Activated CD8-positive, alpha-beta T cell treated with anti-CD3 and anti-CD28 coated beads, Interleukin-2, amount 10 ng/mL, durations not matched to agents 7 days and 5 days (primary cell): ENCODE measurements at regions of chr22 and their contacts with region 1.

Region 1: DNA sequence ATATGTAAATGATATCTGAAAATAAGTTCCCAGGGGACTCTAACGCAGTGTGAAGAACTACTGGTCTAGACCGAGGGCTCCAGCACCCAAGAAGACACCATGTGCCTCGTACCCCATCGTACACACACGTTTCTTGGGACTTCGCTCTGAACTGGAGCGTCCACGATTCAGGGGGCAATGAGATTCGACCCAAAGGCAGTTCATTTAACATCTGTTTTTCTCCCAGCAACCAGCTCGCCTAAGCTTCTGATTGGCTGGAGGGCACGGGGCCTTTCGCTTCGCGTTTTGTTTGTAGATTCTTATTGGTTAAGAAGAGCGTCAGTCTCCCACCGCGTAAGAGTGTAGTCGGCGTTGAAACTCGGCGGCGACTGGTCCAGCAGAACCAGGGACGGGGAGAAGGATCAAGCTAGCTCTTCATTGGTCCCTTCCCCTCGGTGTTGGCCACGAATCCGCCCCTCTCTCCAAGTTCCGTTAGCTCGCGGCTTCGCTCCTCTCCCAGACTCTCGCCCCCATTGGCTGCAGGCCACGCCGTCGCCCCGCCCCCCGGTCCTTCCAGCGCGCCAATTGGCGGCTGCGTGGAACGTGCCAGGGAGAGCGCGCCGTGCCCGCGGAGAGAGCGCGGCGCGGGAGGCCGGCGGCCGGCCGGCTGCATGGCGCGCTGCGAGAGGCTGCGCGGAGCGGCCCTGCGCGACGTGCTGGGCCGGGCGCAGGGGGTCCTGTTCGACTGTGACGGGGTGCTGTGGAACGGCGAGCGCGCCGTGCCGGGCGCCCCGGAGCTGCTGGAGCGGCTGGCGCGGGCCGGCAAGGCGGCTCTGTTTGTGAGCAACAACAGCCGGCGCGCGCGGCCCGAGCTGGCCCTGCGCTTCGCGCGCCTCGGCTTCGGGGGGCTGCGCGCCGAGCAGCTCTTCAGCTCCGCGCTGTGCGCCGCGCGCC is at the start of gene PDXP:
- DNase-seq: peak; percentile 99
- ATAC-seq: peak; percentile 98
- H3K4me3 Mint-ChIP-seq: peak within 1 kb of the TSS; percentile 87
- H3K27ac Mint-ChIP-seq: peak within 1 kb of the TSS; percentile 87
- H3K4me1 Mint-ChIP-seq: peaks cover 37% of the 10 kb centered on the region
- H3K27me3 Mint-ChIP-seq: no peaks in the 10 kb centered on the region
- total RNA-seq, gene PDXP: 31.5 to 33.5 TPM

Region 2: DNA sequence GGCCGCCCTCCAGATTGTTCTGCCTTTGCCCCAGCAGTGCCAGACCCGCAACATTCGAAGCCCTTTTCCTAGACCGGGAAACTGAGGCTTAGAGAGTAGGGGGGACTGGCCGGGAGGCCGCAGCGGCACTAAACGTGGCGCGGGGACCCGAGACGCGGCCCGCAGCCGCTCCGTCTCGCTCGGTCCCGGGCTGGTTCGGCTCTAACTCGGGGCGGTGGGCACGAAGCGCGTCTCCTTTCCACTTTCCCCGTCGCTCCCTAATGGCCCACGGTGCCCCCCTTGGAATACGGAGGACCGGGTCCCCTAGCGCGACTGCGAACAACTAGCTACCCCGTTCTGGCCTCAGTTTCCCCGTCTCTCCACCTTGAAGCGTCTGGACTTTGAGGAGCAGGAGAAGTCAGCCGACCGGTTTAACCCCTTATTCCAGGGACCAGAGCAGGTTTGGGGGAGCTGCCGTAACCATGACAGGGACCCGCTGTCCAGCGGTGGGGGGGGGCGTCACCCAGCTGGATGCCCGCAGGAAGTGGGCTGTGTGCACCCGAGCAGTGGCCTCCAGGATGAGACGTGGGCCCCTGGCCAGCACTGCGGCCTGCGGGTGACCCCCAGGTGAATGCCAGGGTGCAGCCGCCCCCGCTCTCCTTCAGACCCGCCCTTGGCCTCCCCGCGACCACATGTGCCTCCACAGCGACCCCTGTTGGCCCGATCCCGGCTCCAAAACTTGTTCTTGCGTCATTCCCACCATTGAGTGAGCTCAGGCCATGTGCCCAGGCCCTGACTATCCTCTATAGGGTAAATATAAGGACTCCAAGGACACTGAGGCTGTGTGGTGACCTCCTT is 97.0 kb before region 1 on chr22:
- CTCF ChIA-PET with region 1: no interaction called
- POLR2A ChIA-PET with region 1: no interaction called
- DNase-seq: peak; percentile 82
- ATAC-seq: peak; percentile 25
- H3K4me3 Mint-ChIP-seq: peak overlapping the region; percentile 5
- H3K27ac Mint-ChIP-seq: no peak overlapping the region
- H3K4me1 Mint-ChIP-seq: peaks cover 31% of the 10 kb centered on the region
- H3K27me3 Mint-ChIP-seq: peaks cover 67% of the 10 kb centered on the region

Region 3: DNA sequence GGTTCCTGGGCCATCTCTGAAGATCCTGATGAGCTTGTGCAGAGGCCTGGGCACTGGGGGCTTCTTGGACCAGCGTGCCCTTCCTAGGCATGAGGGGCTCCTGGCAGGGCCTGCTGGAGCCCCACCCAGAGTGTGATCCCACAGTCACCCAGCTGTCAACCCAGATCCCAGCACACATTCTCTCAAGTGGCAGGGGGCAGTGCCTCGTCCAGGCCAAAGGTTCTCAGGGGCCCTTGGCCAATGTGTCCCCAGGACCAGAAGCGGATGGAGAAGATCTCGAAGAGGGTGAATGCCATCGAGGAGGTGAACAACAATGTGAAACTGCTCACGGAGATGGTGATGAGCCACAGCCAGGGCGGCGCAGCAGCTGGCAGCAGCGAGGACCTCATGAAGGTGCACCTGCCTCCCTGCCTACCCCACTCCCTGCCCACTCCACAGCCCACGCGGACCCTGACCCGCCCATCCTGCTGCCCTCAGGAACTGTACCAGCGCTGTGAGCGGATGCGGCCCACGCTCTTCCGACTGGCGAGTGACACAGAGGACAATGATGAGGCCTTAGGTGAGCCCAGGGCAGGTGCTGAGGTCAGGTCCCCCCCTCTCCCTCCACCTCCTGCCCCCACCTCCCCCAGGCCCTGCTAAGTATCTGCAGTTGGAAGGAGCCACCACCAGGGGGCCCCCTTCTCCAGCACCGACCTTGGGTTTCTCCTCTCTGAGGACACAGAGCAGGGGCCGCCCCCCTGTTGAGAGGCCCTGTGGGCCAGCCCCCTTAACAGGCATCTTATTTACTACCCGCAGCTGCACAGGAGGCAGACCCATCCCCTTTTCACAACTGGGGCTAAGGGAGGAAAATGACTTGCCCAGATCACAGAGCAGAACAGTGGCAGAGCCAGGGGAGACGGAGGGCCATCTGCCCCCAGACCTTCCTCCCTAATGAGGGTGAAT is 35.1 kb before region 1 on chr22:
- CTCF ChIA-PET with region 1: interaction called, 16 read pairs
- POLR2A ChIA-PET with region 1: interaction called, 7 read pairs
- DNase-seq: peak; percentile 85
- ATAC-seq: peak; percentile 66
- H3K4me3 Mint-ChIP-seq: no peak overlapping the region
- H3K27ac Mint-ChIP-seq: peak overlapping the region; percentile 89
- H3K4me1 Mint-ChIP-seq: peaks cover 52% of the 10 kb centered on the region
- H3K27me3 Mint-ChIP-seq: no peaks in the 10 kb centered on the region

Region 4: DNA sequence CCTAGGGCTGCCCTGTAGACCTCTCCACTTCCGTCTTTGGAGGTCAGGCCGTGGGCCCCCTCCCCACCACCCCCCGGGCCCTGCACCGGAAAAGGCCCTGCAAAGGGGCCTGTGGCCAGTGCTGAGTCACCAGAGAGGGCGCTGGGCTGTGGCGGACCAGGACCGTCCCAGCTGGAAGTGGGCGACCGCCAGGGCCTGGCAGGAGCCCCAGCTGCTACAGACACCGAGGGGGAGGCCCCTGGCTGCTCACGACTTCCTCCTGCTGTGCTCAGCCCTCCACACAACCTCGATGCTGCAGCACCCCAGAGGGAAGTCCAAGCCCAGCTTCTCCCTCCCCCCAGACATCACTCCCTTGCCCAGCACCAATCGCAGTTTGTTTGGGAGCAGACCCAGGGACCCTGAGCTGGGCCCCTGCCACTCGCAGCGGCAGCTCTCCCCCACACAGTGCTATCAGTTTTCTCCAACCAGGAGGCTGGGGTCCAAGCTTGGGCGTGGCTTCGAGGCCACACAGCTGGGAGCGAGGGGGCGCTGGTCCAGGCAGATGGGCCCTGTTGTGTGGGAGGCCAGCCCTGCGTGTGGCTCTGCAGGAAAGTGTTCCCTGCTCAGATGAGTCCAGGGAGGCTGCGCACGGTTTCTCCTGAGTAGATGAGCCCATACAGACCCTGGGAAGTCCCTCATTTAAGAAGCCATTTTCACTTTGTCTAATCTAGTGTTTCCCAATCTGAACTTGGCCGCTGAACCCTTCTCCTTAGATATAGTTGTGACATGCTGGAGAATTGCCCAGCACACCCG is 24.6 kb before region 1 on chr22:
- CTCF ChIA-PET with region 1: interaction called, 201 read pairs
- POLR2A ChIA-PET with region 1: interaction called, 8 read pairs
- DNase-seq: peak; percentile 81
- ATAC-seq: peak; percentile 53
- H3K4me3 Mint-ChIP-seq: peak overlapping the region; percentile 72
- H3K27ac Mint-ChIP-seq: peak overlapping the region; percentile 97
- H3K4me1 Mint-ChIP-seq: peaks cover 85% of the 10 kb centered on the region
- H3K27me3 Mint-ChIP-seq: no peaks in the 10 kb centered on the region

Region 5: DNA sequence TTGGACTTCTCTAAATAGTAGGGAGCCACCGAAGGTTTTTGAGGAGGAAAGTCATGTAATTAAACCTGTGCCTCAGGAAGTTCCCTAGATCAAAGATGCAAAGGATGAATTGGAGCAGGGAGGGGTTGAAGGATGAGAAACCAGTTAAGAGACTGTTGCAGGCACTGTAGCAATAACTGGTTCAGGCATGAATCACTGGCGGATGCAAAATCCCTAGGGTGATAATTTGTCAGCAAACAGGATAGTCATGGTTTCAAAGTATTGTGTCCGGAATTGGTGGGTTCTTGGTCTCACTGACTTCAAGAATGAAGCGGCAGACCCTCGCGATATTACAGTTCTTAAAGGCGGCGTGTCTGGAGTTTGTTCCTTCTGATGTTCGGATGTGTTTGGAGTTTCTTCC is 58.3 kb after region 1 on chr22:
- CTCF ChIA-PET with region 1: no interaction called
- POLR2A ChIA-PET with region 1: no interaction called
- DNase-seq: no peak
- ATAC-seq: no peak
- H3K4me3 Mint-ChIP-seq: no peak overlapping the region
- H3K27ac Mint-ChIP-seq: no peak overlapping the region
- H3K4me1 Mint-ChIP-seq: no peaks in the 10 kb centered on the region
- H3K27me3 Mint-ChIP-seq: no peaks in the 10 kb centered on the region